HEK293T (cell line): ENCODE measurements at regions of chrX and their contacts with region 1.

Region 1: DNA sequence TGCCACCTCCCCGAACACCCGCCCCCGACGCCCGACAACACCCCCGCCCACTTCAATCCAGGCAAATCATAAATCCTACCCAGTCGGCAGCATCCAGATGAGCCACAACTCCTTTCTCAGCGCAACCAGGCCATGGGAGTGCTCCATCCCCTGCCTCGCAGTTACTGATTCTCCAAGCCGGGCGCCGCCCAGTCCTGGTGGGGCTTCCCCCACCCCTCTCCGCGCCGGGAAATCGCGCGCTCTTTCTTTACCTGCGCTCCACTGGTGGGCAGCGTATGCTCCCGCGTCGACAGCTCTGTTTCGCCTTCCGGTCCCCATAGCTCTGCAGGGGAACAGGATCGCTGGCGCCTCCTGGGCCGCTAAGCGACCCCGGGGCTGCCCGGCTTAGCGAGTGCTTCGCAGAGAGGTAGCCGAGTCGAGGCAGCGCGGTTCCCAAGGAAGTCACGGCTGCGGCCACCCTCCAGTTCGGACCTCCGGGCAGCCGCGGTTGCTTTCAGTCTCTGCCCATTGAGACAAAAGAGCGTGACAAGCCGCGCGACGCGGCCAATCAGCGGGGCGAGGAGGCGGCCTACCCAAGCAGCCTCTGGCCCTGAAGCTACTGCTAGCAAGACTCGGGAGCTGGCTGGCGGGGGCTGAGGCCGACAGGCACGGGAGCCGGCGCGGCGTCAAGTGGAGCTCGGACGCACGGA is 43.7 kb upstream of the TMSB15B start:
- DNase-seq: peak; percentile 74

Region 2: GRCh38 chrX:103941201-103941975 is 22.7 kb after region 1 on chrX:
- CTCF ChIA-PET with region 1: interaction called, 4 read pairs
- POLR2A ChIA-PET with region 1: interaction called, 11 read pairs
- DNase-seq: peak; percentile 34